Cardiac septum (tissue), 1 donor: ENCODE measurements at regions of chr4 and their contacts with region 1.

Region 1: GRCh38 chr4:85968945-85969819 is 390.7 kb downstream of the MAPK10 start:
- DNase-seq: no peak

Region 2: GRCh38 chr4:85084380-85085094 is 884.6 kb before region 1 on chr4:
- intact Hi-C with region 1: loop called (anchors 10 kb)
- DNase-seq: no peak

Region 3: GRCh38 chr4:85147439-85148076 is 821.6 kb before region 1 on chr4:
- intact Hi-C with region 1: loop called (anchors 2 kb)
- DNase-seq: no peak

Region 4: DNA sequence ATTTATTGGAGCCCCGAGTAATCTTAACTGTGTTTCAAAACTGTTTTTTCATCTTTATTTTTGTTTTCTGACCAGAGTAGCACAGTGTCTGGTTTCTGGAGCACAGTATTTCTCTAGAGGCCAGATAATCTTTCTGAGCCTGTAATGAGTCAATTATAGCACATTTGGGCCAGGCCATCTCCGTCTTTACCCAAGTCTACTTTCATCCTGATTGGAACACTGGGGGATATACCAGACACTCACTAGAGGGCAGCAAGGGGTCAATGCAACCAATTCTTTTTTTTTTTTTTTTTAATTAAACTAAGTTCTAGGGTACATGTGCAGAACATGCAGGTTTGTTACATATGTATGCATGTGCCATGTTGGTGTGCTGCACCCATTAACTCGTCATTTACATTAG is 212.2 kb before region 1 on chr4:
- intact Hi-C with region 1: loop called (anchors 5 kb)
- DNase-seq: no peak

Region 5: DNA sequence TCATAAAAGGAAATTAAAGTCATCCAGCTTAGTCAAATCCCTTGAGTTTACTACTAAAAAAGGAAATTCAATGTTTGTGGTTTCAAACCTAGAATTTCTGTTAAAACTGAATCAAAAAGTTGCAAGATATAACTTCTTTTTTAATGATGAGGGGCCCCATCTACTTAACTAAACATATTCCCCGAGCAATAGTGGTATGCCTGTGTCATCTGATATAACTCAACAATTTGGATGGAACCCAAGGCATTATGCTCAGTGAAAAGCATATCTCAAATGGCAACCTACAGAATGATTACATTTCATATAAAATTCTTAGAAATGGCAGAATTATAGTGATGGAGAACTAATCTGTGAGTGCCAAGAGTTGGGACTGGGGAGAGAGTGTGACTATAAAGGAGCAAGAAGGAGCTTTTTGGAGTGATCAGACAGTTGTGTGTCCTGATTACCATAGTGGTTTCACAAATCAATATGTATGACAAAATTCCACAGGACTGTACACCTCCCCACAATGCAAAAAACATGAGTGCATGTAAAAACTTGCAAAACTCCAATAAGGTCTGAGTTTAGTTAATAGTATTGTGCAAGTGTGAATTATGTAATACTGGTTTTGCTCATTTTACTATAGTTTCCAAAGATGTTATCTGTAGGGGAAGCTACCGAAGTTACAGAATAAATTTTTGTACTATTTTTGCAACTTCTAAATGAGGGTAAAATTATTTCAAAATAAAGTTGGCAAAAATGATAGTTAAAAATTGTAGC is 171.0 kb before region 1 on chr4:
- intact Hi-C with region 1: loop called (anchors 2 kb)
- DNase-seq: no peak

Region 6: DNA sequence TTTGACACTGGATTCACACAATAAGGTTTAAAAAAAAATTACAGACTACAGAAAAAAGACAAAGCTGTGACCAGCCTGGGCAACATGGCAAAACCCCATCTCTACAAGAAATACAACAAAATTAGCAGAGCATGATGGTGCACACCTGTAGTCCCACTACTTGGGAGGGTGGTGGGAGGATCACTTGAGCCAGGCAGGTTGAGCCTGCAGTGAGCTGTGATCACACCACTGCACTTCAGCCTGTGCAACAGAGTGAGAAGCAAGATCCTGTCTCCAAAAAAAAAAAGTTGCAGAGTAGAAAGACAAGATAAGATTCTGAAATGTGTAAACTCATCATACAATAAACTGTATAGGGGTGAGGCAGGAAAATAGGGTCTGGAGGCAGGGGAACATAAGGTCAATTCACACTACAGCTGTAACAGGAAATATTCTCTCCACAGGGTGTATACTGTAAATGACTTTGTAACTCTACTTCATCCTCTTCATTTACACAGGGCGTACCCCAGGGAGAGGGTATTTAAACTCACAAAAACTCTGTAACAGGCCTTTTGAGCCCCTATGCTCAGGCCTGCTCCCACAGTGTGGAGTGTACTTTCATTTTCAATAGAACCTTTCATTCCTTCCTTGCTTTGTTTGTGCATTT is 503.3 kb after region 1 on chr4:
- intact Hi-C with region 1: no loop called
- DNase-seq: no peak